Ascending aorta (tissue), 2 donors: ENCODE measurements at regions of chr5 and their contacts with region 1.

Region 1: GRCh38 chr5:147935032-147935431 is 28.7 kb upstream of the C5orf46 start:
- DNase-seq: no peak
- H3K4me3 ChIP-seq: no peak overlapping the region
- H3K27ac ChIP-seq: no peak overlapping the region
- H3K4me1 ChIP-seq: peaks cover 0 to 13% of the 10 kb centered on the region in 2 donors
- H3K27me3 ChIP-seq: no peaks in the 10 kb centered on the region
- CTCF ChIP-seq: peak; percentile 53 to 65 (median 63)

Region 2: DNA sequence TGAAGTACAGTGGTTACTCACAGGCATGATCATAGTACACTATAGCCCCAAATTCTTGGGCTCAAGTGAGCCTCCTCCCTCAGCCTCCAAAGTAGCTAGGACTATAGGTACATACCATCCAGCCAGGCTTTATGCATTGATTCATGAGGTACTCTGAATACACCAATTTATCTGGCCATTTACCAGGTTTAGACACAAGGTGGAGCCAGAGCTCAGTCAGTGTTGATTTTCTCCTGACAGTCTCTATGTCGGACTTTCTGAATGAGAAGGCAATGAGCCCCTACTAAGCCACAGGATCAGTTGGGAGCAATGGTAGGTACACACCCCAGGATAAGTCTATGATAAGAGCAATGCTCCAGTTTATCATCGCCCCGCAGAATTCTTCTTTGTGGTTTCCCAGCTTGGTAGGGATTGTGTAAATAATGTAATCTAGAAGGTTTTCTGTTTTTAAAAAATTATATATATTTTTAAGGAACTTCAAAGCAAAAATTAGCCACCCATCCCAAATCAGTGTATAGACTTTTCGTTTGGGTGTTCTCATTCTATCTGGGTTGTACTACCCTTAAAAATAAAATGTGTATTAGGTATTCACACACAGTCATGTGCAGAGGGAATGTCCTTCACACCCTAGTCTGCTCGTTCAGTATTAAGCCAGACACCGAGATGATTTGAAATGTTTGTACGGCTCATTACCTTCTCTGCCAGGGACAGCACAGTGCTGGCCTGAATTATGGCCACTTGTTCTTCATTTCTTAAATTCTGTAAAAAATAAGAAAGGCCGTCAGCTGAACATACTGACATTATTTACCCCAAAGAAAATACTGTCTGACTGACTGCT is 306.8 kb before region 1 on chr5:
- intact Hi-C with region 1: loop called (anchors 10 kb)
- DNase-seq: peak in 1 of 2 donors; percentile 71
- H3K4me3 ChIP-seq: no peak overlapping the region
- H3K27ac ChIP-seq: no peak overlapping the region
- H3K4me1 ChIP-seq: no peaks in the 10 kb centered on the region
- H3K27me3 ChIP-seq: no peaks in the 10 kb centered on the region
- CTCF ChIP-seq: peak; percentile 53 to 74 (median 56)

Region 3: DNA sequence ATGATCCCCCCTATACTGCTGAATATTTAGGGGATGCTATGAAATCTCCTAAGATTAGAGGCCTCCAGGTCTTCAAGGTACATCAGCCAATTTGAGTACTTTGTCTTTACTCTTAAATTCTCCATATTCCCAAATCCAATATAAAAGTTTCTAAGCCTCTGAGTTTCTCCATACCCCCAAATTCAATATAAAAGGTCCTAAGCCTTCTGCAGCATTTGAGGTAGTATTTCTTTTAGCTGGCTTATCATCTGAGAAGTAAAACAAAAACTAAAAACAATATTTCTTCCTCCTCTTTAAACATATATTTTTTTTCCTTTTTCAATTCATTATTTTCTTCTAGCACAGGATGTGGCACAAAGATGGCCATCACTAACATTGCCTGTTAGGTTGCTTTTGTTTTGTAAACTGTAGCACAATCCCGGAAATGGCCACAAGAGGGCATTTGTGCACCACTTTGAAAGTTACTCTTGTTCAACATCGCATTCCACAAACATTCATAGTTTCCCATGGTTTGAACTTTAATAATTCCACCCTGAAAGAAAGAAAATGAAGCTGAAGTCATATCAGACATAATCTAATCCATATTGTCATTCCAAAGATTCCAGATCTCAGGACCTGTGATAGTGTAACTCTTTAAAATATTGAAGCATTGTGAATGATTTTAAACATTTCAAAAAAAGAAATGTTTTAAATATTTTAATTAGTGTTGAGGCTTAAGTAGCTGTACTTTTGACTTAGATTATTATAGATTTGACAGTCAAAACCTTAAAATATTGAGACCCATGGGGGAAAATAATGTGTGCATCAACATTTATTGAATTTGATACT is 77.5 kb before region 1 on chr5:
- intact Hi-C with region 1: loop called (anchors 1 kb)
- DNase-seq: peak in 1 of 2 donors; percentile 86
- H3K4me3 ChIP-seq: no peak overlapping the region
- H3K27ac ChIP-seq: no peak overlapping the region
- H3K4me1 ChIP-seq: peaks cover 0 to 3% of the 10 kb centered on the region in 2 donors
- H3K27me3 ChIP-seq: no peaks in the 10 kb centered on the region
- CTCF ChIP-seq: peak; percentile 41 to 82 (median 76)

Region 4: GRCh38 chr5:147887024-147887627 is 47.9 kb before region 1 on chr5:
- intact Hi-C with region 1: loop called (anchors 1 kb)
- DNase-seq: no peak
- H3K4me3 ChIP-seq: no peak overlapping the region
- H3K27ac ChIP-seq: no peak overlapping the region
- H3K4me1 ChIP-seq: peaks cover 0 to 11% of the 10 kb centered on the region in 2 donors
- H3K27me3 ChIP-seq: no peaks in the 10 kb centered on the region
- CTCF ChIP-seq: peak; percentile 11 to 66 (median 52)